H1 (cell line): ENCODE measurements at regions of chr9 and their contacts with region 1.

Region 1: GRCh38 chr9:87557996-87558395 is 60.3 kb downstream of the DAPK1 start:
- DNase-seq: no peak
- H3K4me3 ChIP-seq: no peak overlapping the region
- H3K27ac ChIP-seq: no peak overlapping the region
- H3K4me1 ChIP-seq: no peaks in the 10 kb centered on the region
- H3K27me3 ChIP-seq: no peaks in the 10 kb centered on the region
- CTCF ChIP-seq: no peak
- EP300 ChIP-seq: no peak
- POLR2A ChIP-seq: no peak
- RAD21 ChIP-seq: no peak

Region 2: GRCh38 chr9:87447556-87448432 is 110.2 kb before region 1 on chr9:
- CTCF ChIA-PET with region 1: no interaction called
- POLR2A ChIA-PET with region 1: no interaction called
- DNase-seq: no peak
- H3K4me3 ChIP-seq: no peak overlapping the region
- H3K27ac ChIP-seq: no peak overlapping the region
- H3K4me1 ChIP-seq: peaks cover 0 to 2% (median 0%) of the 10 kb centered on the region in 4 experiments; a peak in 1 of 7 replicates
- H3K27me3 ChIP-seq: no peaks in the 10 kb centered on the region
- CTCF ChIP-seq: no peak
- EP300 ChIP-seq: no peak
- POLR2A ChIP-seq: no peak
- RAD21 ChIP-seq: no peak

Region 3: GRCh38 chr9:87569518-87569917 is 11.5 kb after region 1 on chr9:
- CTCF ChIA-PET with region 1: interaction called, 22 read pairs
- POLR2A ChIA-PET with region 1: interaction called, 9 read pairs
- DNase-seq: no peak
- H3K4me3 ChIP-seq: no peak overlapping the region
- H3K27ac ChIP-seq: no peak overlapping the region
- H3K4me1 ChIP-seq: peaks cover 4 to 26% (median 17%) of the 10 kb centered on the region in 4 experiments
- H3K27me3 ChIP-seq: no peaks in the 10 kb centered on the region
- CTCF ChIP-seq: no peak
- EP300 ChIP-seq: no peak
- POLR2A ChIP-seq: no peak
- RAD21 ChIP-seq: no peak

Region 4: DNA sequence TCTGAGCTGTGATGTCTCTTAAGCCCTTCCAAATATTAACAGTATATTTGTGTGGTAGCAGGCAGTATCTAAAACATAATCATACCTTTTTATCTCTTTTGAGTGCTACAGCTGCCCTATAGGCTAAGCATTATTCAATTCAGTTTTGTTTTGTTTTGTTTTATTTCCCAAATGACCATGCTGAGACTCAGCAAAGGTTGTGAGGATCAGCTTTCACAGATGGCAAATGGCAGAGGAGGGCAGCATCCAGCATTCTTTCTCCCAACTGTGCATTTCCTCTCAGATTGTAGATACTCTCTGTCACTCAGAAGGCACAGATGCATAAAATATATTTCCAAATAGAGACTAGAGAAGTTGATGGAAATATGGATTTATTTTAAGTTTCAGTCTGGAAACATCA is 30.3 kb after region 1 on chr9:
- CTCF ChIA-PET with region 1: no interaction called
- POLR2A ChIA-PET with region 1: no interaction called
- DNase-seq: no peak
- H3K4me3 ChIP-seq: no peak overlapping the region
- H3K27ac ChIP-seq: no peak overlapping the region
- H3K4me1 ChIP-seq: peaks cover 2 to 8% (median 5%) of the 10 kb centered on the region in 4 experiments; a peak in 5 of 7 replicates
- H3K27me3 ChIP-seq: no peaks in the 10 kb centered on the region
- CTCF ChIP-seq: no peak
- EP300 ChIP-seq: no peak
- POLR2A ChIP-seq: no peak
- RAD21 ChIP-seq: no peak